Activated CD4-positive, alpha-beta T cell treated with anti-CD3 and anti-CD28 coated beads, Interleukin-2, amount 10 ng/mL, durations not matched to agents 7 days and 5 days (primary cell): ENCODE measurements at regions of chr18 and their contacts with region 1.

Region 1: DNA sequence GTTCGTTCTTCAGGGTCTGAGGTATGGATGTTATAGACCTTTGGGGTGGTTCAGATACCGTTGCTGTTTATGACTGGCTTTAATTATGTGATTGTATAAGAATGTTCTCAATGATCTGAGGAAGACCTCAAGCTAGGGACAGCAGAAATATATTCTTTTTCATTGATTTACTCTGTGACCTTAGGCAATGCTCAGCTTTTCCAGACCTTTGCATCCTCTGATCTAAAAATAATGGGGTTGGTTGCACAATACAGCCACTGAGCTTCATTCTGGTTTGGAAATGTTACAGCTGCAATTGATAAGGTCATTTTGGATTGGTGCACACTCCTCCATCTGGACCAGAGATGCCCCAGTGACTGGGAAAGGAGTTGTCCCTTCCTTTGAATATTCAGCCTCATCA is 17.2 kb upstream of the CABYR start:
- DNase-seq: no peak
- H3K4me3 Mint-ChIP-seq: no peak overlapping the region
- H3K27ac Mint-ChIP-seq: no peak overlapping the region
- H3K4me1 Mint-ChIP-seq: no peaks in the 10 kb centered on the region
- H3K27me3 Mint-ChIP-seq: no peaks in the 10 kb centered on the region

Region 2: DNA sequence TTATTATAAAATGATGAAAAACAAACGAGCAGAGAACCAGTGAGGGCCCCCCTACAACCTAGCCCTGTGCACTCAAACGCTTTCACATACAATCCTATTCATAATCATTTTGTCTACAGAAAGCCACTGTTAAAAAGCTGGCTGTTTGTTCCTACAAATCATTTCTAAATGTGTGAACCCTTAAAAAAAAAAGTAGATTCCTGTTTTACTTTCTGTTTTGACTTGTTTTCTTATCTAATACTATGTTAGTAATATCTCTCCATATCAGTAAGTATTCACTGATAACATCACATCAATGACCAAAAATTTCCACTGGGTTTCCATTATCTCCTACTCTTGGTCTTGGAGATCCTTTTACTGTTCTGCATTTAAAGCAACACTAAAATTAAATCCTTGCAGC is 235.9 kb before region 1 on chr18:
- CTCF ChIA-PET with region 1: no interaction called
- POLR2A ChIA-PET with region 1: interaction called, 11 read pairs
- DNase-seq: no peak
- H3K4me3 Mint-ChIP-seq: no peak overlapping the region
- H3K27ac Mint-ChIP-seq: peak overlapping the region; percentile 52
- H3K4me1 Mint-ChIP-seq: peaks cover 29% of the 10 kb centered on the region
- H3K27me3 Mint-ChIP-seq: peaks cover 5% of the 10 kb centered on the region